GM12878 (cell line): ENCODE measurements at regions of chr17 and their contacts with region 1.

Region 1: DNA sequence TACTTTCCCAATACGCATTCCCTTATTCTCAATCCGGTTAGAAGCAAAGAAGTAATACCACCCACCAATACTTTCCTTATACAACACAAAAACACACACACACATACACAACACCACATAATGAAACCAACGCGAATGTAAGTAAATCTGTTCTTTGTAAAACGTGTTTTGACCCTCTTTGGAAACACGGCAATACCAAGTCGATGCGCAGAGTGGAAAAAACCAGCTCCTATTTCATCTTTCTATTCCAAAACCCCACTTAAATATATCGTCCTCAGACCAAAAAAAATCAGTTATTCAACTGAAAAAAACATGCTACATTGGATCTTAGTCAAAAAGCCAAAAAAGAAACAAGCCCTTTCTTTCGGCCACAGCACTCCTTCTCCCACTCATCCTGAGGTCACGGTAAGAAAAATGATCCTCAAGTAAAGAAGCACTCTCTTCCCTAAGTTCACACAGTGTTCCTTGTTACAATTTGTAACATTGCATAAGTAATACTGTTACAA is 31.0 kb upstream of the ARL4D start:
- DNase-seq: peak; percentile 91
- ATAC-seq: peak; percentile 67
- H3K4me3 ChIP-seq: peak overlapping the region; percentile 62; the same call in 1 of the 2 replicates
- H3K27ac ChIP-seq: peak overlapping the region; percentile 99
- H3K4me1 ChIP-seq: peaks cover 44% of the 10 kb centered on the region
- H3K27me3 ChIP-seq: no peaks in the 10 kb centered on the region
- CTCF ChIP-seq: no peak
- EP300 ChIP-seq: no peak
- POLR2A ChIP-seq: peak; percentile 99
- RAD21 ChIP-seq: no peak

Region 2: GRCh38 chr17:43388359-43389045 is 20.7 kb after region 1 on chr17:
- CTCF ChIA-PET with region 1: interaction called, 52 read pairs
- POLR2A ChIA-PET with region 1: interaction called, 49 read pairs
- RAD21 ChIA-PET with region 1: interaction called, 21 read pairs
- SMC1A ChIA-PET with region 1: interaction called, 20 read pairs
- in situ Hi-C with region 1: no loop called
- intact Hi-C with region 1: loop called (anchors 1 kb)
- DNase-seq: peak; percentile 75
- ATAC-seq: peak; percentile 90
- H3K4me3 ChIP-seq: peak overlapping the region; percentile 70
- H3K27ac ChIP-seq: peak overlapping the region; percentile 97
- H3K4me1 ChIP-seq: peaks cover 4% of the 10 kb centered on the region
- H3K27me3 ChIP-seq: no peaks in the 10 kb centered on the region
- CTCF ChIP-seq: no peak
- EP300 ChIP-seq: peak in 1 of 2 experiments; percentile 15; a peak in 1 of 4 replicates
- POLR2A ChIP-seq: peak; percentile 79
- RAD21 ChIP-seq: no peak

Region 3: GRCh38 chr17:43442711-43443110 is 74.9 kb after region 1 on chr17:
- CTCF ChIA-PET with region 1: no interaction called
- POLR2A ChIA-PET with region 1: no interaction called
- RAD21 ChIA-PET with region 1: no interaction called
- SMC1A ChIA-PET with region 1: no interaction called
- in situ Hi-C with region 1: no loop called
- intact Hi-C with region 1: no loop called
- DNase-seq: no peak
- ATAC-seq: no peak
- H3K4me3 ChIP-seq: no peak overlapping the region
- H3K27ac ChIP-seq: no peak overlapping the region
- H3K4me1 ChIP-seq: no peaks in the 10 kb centered on the region
- H3K27me3 ChIP-seq: no peaks in the 10 kb centered on the region
- CTCF ChIP-seq: no peak
- EP300 ChIP-seq: no peak
- POLR2A ChIP-seq: no peak
- RAD21 ChIP-seq: no peak